Activated naive CD4-positive, alpha-beta T cell treated with anti-CD3 and anti-CD28 coated beads, Interleukin-2, amount 10 ng/mL, durations not matched to agents 7 days and 5 days (primary cell): ENCODE measurements at regions of chr20 and their contacts with region 1.

Region 1: GRCh38 chr20:20824924-20825584 is 112.6 kb upstream of the RALGAPA2 start:
- DNase-seq: peak; percentile 68
- H3K4me3 Mint-ChIP-seq: no peak overlapping the region
- H3K27ac Mint-ChIP-seq: no peak overlapping the region
- H3K4me1 Mint-ChIP-seq: peaks cover 2% of the 10 kb centered on the region
- H3K27me3 Mint-ChIP-seq: peaks cover 39% of the 10 kb centered on the region

Region 2: DNA sequence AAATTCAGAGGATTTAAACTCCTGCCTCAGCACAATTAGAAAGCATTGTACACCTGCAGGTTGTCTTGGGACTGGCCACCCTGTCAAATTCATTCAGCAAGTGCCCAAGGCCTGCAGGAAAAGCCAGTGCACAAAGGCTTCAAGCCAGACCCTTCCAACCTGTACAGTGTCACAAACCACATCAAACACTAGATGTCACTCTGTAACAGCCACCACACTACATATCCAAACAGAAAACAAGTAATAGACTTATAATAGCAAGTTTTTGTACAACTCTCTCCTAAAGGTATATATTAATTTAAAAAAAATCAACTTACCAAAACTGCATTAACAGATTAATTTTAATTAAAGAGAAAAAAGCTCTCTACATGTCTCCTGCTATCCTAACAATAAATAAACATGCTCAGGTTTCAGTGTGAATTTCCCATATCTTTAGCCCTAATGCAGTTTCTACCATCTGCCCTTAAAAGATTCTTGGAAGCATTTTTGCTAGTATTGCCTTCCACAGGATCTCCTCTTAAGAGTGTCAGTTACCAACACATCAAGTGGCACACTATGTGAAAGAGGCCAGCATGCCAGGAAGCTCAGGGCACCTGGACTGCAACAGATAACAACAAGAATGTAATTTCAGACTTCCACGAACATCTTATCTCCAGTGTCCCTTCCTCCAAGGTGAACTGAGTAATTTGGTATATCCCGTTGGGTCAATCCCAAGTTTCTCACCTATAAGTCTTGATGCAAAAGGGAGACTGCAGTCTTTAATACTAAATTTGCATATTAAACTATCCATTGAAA is 160.1 kb before region 1 on chr20:
- CTCF ChIA-PET with region 1: interaction called, 27 read pairs
- DNase-seq: peak; percentile 22
- H3K4me3 Mint-ChIP-seq: no peak overlapping the region
- H3K27ac Mint-ChIP-seq: no peak overlapping the region
- H3K4me1 Mint-ChIP-seq: peaks cover 25% of the 10 kb centered on the region
- H3K27me3 Mint-ChIP-seq: no peaks in the 10 kb centered on the region

Region 3: DNA sequence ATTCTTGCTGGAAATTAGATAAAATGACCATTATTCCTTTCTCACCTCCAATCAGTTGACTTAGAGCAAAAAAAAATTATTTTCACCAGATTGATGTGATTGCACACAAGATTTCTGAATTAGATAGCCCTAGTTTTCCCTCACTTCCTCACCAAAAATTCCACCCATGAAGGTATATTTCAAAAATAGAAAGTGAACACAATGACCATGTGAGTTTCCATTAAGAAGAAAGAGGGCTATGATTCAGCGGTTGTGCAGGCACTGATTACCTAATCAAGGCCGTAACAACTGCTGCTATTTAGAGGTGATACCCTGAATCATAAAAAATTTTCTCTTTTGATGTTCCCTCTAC is 93.1 kb before region 1 on chr20:
- CTCF ChIA-PET with region 1: no interaction called
- DNase-seq: no peak
- H3K4me3 Mint-ChIP-seq: no peak overlapping the region
- H3K27ac Mint-ChIP-seq: no peak overlapping the region
- H3K4me1 Mint-ChIP-seq: peaks cover 17% of the 10 kb centered on the region
- H3K27me3 Mint-ChIP-seq: peaks cover 9% of the 10 kb centered on the region

Region 4: GRCh38 chr20:20989081-20989480 is 164.0 kb after region 1 on chr20:
- CTCF ChIA-PET with region 1: no interaction called
- DNase-seq: no peak
- H3K4me3 Mint-ChIP-seq: no peak overlapping the region
- H3K27ac Mint-ChIP-seq: no peak overlapping the region
- H3K4me1 Mint-ChIP-seq: no peaks in the 10 kb centered on the region
- H3K27me3 Mint-ChIP-seq: no peaks in the 10 kb centered on the region